Naive thymus-derived CD4-positive, alpha-beta T cell (primary cell): ENCODE measurements at regions of chr1 and their contacts with region 1.

Region 1: GRCh38 chr1:52683367-52683940 is 14.7 kb downstream of the COA7 start:
- DNase-seq: no peak
- ATAC-seq: no peak
- H3K4me3 ChIP-seq: no peak overlapping the region
- H3K4me3 Mint-ChIP-seq: no peak overlapping the region
- H3K27ac ChIP-seq: no peak overlapping the region
- H3K27ac Mint-ChIP-seq: peak overlapping the region in 6 of 9 donors; percentile 8 to 68 (median 26)
- H3K4me1 ChIP-seq: peaks cover 4 to 6% of the 10 kb centered on the region in 2 donors
- H3K4me1 Mint-ChIP-seq: peaks cover 6 to 28% (median 13%) of the 10 kb centered on the region in 7 donors
- H3K27me3 ChIP-seq: no peaks in the 10 kb centered on the region
- H3K27me3 Mint-ChIP-seq: no peaks in the 10 kb centered on the region

Region 2: GRCh38 chr1:52111492-52111891 is 572.0 kb before region 1 on chr1:
- CTCF ChIA-PET with region 1: no interaction called
- POLR2A ChIA-PET with region 1: no interaction called
- intact Hi-C with region 1: no loop called
- DNase-seq: no peak
- ATAC-seq: no peak
- H3K4me3 ChIP-seq: no peak overlapping the region
- H3K4me3 Mint-ChIP-seq: no peak overlapping the region
- H3K27ac ChIP-seq: no peak overlapping the region
- H3K27ac Mint-ChIP-seq: no peak overlapping the region
- H3K4me1 ChIP-seq: no peaks in the 10 kb centered on the region
- H3K4me1 Mint-ChIP-seq: no peaks in the 10 kb centered on the region
- H3K27me3 ChIP-seq: no peaks in the 10 kb centered on the region
- H3K27me3 Mint-ChIP-seq: peaks cover 0 to 7% (median 0%) of the 10 kb centered on the region in 5 donors

Region 3: DNA sequence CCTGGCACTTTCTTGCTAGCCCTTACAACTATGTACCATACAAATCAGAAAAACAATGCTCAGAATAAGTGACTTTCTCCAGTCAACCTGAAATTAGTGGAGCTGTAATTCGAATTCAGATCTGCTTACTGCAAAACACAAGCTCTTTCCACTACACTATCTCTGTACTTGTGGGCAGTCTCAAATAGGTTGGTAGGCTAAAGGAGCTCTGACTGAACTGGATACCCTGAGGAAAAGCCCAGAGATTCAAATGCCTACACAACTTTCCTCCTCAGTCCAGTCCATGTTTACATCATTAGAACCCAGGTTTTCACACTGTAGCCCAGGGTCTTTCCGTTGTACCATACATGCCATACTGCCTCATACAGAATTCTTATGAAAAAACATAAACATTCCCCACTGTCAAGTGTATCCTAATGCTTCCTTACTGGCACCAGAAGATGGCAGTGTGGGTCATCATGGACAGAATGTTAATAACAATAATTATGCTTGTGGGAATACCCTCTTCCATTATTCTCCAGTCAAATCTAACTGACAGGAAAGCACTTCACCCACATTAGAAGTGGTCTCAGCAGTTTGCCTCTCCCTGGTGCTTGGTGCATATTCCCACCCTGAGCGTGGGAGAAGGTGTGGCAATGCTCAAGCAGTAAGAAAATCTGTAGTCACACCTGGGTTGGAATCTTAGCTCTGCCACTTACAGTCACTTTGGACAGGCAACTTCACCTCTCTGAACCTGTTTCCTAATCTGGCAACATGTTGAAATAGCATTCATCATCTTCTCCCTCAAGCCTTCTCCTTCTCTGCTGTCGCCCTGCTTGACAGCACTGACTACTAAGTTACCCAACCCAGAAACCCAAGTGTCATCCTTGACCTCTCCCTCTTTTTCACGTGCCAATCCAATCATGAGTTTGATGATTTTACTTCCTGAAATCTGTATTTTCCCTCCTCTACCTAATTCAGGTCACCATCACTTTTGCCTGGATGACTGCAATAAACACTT is 556.0 kb before region 1 on chr1:
- CTCF ChIA-PET with region 1: interaction called, 5 read pairs
- POLR2A ChIA-PET with region 1: no interaction called
- intact Hi-C with region 1: loop called (anchors 1 to 5 kb)
- DNase-seq: peak in 3 of 9 donors; percentile 14 to 27 (median 25)
- ATAC-seq: peak; percentile 64
- H3K4me3 ChIP-seq: no peak overlapping the region
- H3K4me3 Mint-ChIP-seq: no peak overlapping the region
- H3K27ac ChIP-seq: no peak overlapping the region
- H3K27ac Mint-ChIP-seq: no peak overlapping the region
- H3K4me1 ChIP-seq: no peaks in the 10 kb centered on the region
- H3K4me1 Mint-ChIP-seq: peaks cover 0 to 4% (median 0%) of the 10 kb centered on the region in 7 donors
- H3K27me3 ChIP-seq: no peaks in the 10 kb centered on the region
- H3K27me3 Mint-ChIP-seq: peaks cover 0 to 47% (median 9%) of the 10 kb centered on the region in 5 donors

Region 4: GRCh38 chr1:52296345-52296744 is 387.1 kb before region 1 on chr1:
- CTCF ChIA-PET with region 1: no interaction called
- POLR2A ChIA-PET with region 1: interaction called, 3 read pairs
- intact Hi-C with region 1: loop called in 1 of 2 experiments (anchors 1 kb)
- DNase-seq: peak in 7 of 9 donors; percentile 5 to 32 (median 19)
- ATAC-seq: peak; percentile 55
- H3K4me3 ChIP-seq: no peak overlapping the region
- H3K4me3 Mint-ChIP-seq: no peak overlapping the region
- H3K27ac ChIP-seq: no peak overlapping the region
- H3K27ac Mint-ChIP-seq: peak overlapping the region in 1 of 9 donors; percentile 0
- H3K4me1 ChIP-seq: no peaks in the 10 kb centered on the region
- H3K4me1 Mint-ChIP-seq: peaks cover 0 to 2% (median 0%) of the 10 kb centered on the region in 7 donors
- H3K27me3 ChIP-seq: no peaks in the 10 kb centered on the region
- H3K27me3 Mint-ChIP-seq: no peaks in the 10 kb centered on the region

Region 5: GRCh38 chr1:52487632-52488031 is 195.8 kb before region 1 on chr1:
- CTCF ChIA-PET with region 1: interaction called, 3 read pairs
- POLR2A ChIA-PET with region 1: no interaction called
- intact Hi-C with region 1: loop called in 1 of 2 experiments (anchors 5 kb)
- DNase-seq: no peak
- ATAC-seq: no peak
- H3K4me3 ChIP-seq: no peak overlapping the region
- H3K4me3 Mint-ChIP-seq: no peak overlapping the region
- H3K27ac ChIP-seq: no peak overlapping the region
- H3K27ac Mint-ChIP-seq: peak overlapping the region in 5 of 9 donors; percentile 9 to 81 (median 38)
- H3K4me1 ChIP-seq: no peaks in the 10 kb centered on the region
- H3K4me1 Mint-ChIP-seq: peaks cover 0 to 6% (median 0%) of the 10 kb centered on the region in 7 donors
- H3K27me3 ChIP-seq: no peaks in the 10 kb centered on the region
- H3K27me3 Mint-ChIP-seq: no peaks in the 10 kb centered on the region

Region 6: DNA sequence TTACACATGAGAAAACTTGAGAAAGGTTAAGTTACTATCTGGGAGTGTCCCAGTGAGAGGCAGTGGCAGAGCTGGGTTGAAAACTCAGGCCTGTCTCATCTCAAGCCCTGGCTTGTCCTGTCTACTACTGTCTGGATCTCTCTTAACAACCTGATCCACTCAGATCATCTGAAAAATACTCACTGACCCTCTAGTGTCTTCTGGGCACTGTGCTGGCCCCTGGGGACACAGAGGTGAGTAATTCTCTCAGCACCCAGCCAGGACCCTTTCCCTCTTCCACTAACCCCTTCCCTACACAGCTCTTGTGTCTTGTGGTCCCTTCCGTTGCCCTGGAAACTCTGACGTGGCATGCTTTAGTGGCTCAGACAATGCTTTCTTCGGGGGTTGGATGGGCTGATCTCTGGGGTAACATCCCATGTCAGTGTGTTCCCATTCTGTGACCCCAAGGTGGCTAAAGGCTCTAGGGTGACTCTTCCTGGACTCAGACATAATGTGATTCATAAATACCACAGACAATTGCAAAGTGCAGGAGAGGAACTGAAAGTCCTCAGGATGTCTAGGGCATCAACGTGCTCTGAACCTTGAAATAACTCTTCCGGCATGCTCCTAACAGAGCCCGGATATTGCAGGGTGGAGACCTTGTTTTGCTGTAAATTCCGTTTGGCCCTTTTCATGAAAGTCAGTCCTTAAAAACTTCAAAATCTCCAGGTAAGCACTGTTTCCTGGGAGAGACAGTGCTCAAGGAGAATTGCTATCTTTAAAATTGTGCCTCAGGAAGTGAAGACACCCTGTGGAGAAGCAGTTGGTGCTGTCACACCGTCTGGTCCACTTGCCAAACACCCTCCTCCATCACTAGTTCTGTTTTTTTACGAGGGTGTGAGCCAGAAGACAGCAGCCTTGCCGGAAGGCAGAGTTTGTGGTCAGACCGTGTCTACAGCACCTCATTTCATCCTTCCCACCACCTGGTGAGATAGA is 46.4 kb before region 1 on chr1:
- CTCF ChIA-PET with region 1: no interaction called
- POLR2A ChIA-PET with region 1: interaction called, 6 read pairs
- intact Hi-C with region 1: loop called (anchors 1 kb)
- DNase-seq: peak; percentile 39 to 88 (median 83)
- ATAC-seq: peak; percentile 79
- H3K4me3 ChIP-seq: peak overlapping the region; percentile 19
- H3K4me3 Mint-ChIP-seq: peak overlapping the region; percentile 78 to 94 (median 86)
- H3K27ac ChIP-seq: peak overlapping the region; percentile 95
- H3K27ac Mint-ChIP-seq: peak overlapping the region; percentile 96 to 100 (median 99)
- H3K4me1 ChIP-seq: peaks cover 63 to 82% of the 10 kb centered on the region in 2 donors
- H3K4me1 Mint-ChIP-seq: peaks cover 52 to 85% (median 79%) of the 10 kb centered on the region in 7 donors
- H3K27me3 ChIP-seq: no peaks in the 10 kb centered on the region
- H3K27me3 Mint-ChIP-seq: peaks cover 0 to 11% (median 0%) of the 10 kb centered on the region in 5 donors

Region 7: DNA sequence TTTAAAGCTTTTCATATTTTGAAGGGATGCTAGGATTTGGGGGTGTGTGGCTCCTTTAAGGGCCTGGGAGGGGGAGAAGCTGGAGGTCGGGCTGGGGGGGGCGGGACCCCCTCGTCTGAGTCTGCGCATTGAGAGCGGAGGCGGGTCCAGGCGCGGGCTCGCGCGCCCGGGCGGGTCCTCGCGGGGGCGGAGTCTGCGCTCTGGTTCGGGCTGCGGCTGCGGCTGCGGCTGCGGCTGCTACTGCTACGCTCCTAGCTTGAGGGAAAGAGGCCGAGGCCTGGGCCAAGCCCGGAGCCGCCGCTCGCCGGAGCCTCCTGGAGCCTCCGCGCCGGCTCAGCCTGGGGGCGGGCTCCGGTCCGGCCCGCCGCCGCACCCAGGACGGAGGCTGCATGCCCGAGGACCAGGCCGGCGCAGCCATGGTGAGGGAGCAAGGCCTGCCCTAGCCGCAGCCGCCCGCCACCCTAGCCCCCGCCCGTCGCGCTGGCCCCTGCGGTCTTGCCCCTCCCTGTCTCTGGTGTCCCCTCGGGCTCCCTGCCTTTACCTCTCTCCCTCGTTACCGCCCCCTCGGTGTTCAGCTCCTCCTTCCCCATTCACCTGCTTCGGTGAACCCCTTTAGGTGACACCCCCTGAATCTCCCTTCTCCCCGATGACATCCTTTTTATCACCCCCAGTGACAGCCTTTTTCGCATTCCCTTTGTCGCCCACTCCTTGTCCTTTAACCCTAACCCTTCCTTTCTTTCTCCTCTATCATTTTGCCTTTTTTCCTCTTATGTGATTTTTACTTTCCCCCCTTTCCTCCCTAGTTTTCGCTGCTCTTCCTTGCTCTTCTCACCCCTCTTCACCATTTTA is 43.0 kb after region 1 on chr1 and contains the start of gene ZYG11B:
- CTCF ChIA-PET with region 1: no interaction called
- POLR2A ChIA-PET with region 1: no interaction called
- intact Hi-C with region 1: loop called in 1 of 2 experiments (anchors 1 kb)
- DNase-seq: peak; percentile 80 to 93 (median 88)
- ATAC-seq: peak; percentile 97
- H3K4me3 ChIP-seq: peak within 1 kb of the TSS; percentile 85
- H3K4me3 Mint-ChIP-seq: peak within 1 kb of the TSS; percentile 88 to 99 (median 97)
- H3K27ac ChIP-seq: peak within 1 kb of the TSS; percentile 89
- H3K27ac Mint-ChIP-seq: peak within 1 kb of the TSS; percentile 72 to 97 (median 90)
- H3K4me1 ChIP-seq: peaks cover 12 to 19% of the 10 kb centered on the region in 2 donors
- H3K4me1 Mint-ChIP-seq: peaks cover 24 to 60% (median 54%) of the 10 kb centered on the region in 7 donors
- H3K27me3 ChIP-seq: no peaks in the 10 kb centered on the region
- H3K27me3 Mint-ChIP-seq: peaks cover 0 to 6% (median 0%) of the 10 kb centered on the region in 5 donors
- total RNA-seq, gene ZYG11B: 14.9 to 26.8 (median 17.9) TPM